CD4-positive, alpha-beta memory T cell (primary cell): ENCODE measurements at regions of chr6 and their contacts with region 1.

Region 1: GRCh38 chr6:31862344-31863227 is at the start of gene NEU1:
- DNase-seq: peak; percentile 97 to 100 (median 100)
- H3K4me3 ChIP-seq: peak within 1 kb of the TSS; percentile 88 to 95
- H3K4me3 Mint-ChIP-seq: peak within 1 kb of the TSS; percentile 87 to 96 (median 94)
- H3K27ac ChIP-seq: peak within 1 kb of the TSS; percentile 90
- H3K27ac Mint-ChIP-seq: peak within 1 kb of the TSS; percentile 94 to 98 (median 97)
- H3K4me1 ChIP-seq: peaks cover 16% of the 10 kb centered on the region
- H3K4me1 Mint-ChIP-seq: peaks cover 14 to 33% (median 23%) of the 10 kb centered on the region in 4 donors
- H3K27me3 ChIP-seq: no peaks in the 10 kb centered on the region
- H3K27me3 Mint-ChIP-seq: peaks cover 0 to 2% of the 10 kb centered on the region in 2 donors
- total RNA-seq, gene NEU1: 19.6 to 21.1 TPM

Region 2: GRCh38 chr6:31619805-31620585 is 242.6 kb before region 1 on chr6:
- CTCF ChIA-PET with region 1: interaction called, 3 read pairs
- POLR2A ChIA-PET with region 1: interaction called, 5 read pairs
- intact Hi-C with region 1: loop called (anchors 1 kb)
- DNase-seq: peak; percentile 96 to 98 (median 98)
- H3K4me3 ChIP-seq: peak overlapping the region in 1 of 2 donors; percentile 93
- H3K4me3 Mint-ChIP-seq: peak overlapping the region; percentile 89 to 98 (median 93)
- H3K27ac ChIP-seq: peak overlapping the region; percentile 99
- H3K27ac Mint-ChIP-seq: peak overlapping the region; percentile 91 to 99 (median 98)
- H3K4me1 ChIP-seq: peaks cover 34% of the 10 kb centered on the region
- H3K4me1 Mint-ChIP-seq: peaks cover 21 to 49% (median 39%) of the 10 kb centered on the region in 4 donors
- H3K27me3 ChIP-seq: no peaks in the 10 kb centered on the region
- H3K27me3 Mint-ChIP-seq: no peaks in the 10 kb centered on the region

Region 3: GRCh38 chr6:31660381-31661261 is 202.0 kb before region 1 on chr6 and contains the start of gene C6orf47:
- CTCF ChIA-PET with region 1: no interaction called
- POLR2A ChIA-PET with region 1: interaction called, 22 read pairs
- intact Hi-C with region 1: loop called (anchors 1 kb)
- DNase-seq: peak; percentile 64 to 76 (median 66)
- H3K4me3 ChIP-seq: peak within 1 kb of the TSS; percentile 71 to 83
- H3K4me3 Mint-ChIP-seq: peak within 1 kb of the TSS; percentile 86 to 93 (median 92)
- H3K27ac ChIP-seq: peak within 1 kb of the TSS; percentile 84
- H3K27ac Mint-ChIP-seq: peak within 1 kb of the TSS; percentile 88 to 95 (median 91)
- H3K4me1 ChIP-seq: peaks cover 61% of the 10 kb centered on the region
- H3K4me1 Mint-ChIP-seq: peaks cover 48 to 87% (median 66%) of the 10 kb centered on the region in 4 donors
- H3K27me3 ChIP-seq: no peaks in the 10 kb centered on the region
- H3K27me3 Mint-ChIP-seq: no peaks in the 10 kb centered on the region
- total RNA-seq, gene C6orf47: 37.5 to 39.9 TPM

Region 4: GRCh38 chr6:31680840-31681671 is 181.5 kb before region 1 on chr6 and contains the start of gene LY6G5C:
- CTCF ChIA-PET with region 1: interaction called, 4 read pairs
- POLR2A ChIA-PET with region 1: interaction called, 3 read pairs
- intact Hi-C with region 1: loop called (anchors 1 kb)
- DNase-seq: peak in 4 of 5 donors; percentile 51 to 59 (median 56)
- H3K4me3 ChIP-seq: peak within 1 kb of the TSS; percentile 69 to 70
- H3K4me3 Mint-ChIP-seq: peak within 1 kb of the TSS; percentile 86 to 91 (median 90)
- H3K27ac ChIP-seq: peak within 1 kb of the TSS; percentile 51
- H3K27ac Mint-ChIP-seq: peak within 1 kb of the TSS; percentile 77 to 92 (median 86)
- H3K4me1 ChIP-seq: peaks cover 19% of the 10 kb centered on the region
- H3K4me1 Mint-ChIP-seq: peaks cover 11 to 27% (median 16%) of the 10 kb centered on the region in 4 donors
- H3K27me3 ChIP-seq: no peaks in the 10 kb centered on the region
- H3K27me3 Mint-ChIP-seq: no peaks in the 10 kb centered on the region
- total RNA-seq, gene LY6G5C: 4.4 to 4.5 TPM

Region 5: DNA sequence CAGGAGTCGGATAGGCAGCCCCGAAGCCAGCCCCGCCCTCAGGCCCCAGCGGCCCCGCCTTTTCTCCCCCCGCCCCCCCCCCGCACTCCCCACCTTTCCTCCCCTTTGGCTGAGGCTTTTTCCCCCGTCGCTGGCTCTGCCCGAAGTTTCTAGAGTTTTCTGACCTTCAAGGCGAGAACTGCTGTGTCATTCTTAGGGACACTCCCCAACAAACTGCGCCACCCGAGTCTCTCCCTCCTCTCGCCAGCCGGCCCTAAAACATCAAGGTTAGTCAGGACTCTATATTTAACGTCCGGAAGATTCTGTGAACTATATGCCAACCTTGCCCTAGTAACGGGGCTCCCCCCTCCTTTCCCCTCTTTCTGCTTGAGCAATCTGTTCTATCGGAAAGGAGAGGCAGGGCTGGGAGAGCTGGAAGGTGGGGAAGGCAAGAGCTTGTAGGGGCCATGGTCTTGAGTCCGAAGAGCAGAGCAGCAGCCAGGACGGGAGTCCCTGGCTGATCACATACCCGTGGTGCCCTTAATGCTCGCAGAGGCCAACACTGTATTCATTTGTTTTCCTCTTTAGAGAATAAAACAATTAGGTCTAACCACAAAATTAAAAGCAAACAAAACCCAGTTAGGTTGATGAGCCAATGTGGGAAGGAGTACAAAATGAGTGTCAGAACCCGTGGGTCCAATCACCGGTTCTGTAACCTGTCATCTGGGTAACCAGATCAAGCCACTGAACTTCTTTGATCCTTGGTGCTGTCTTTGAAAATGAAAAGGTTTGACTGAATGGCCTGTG is 40.4 kb before region 1 on chr6:
- CTCF ChIA-PET with region 1: no interaction called
- POLR2A ChIA-PET with region 1: interaction called, 11 read pairs
- intact Hi-C with region 1: loop called (anchors 5 kb)
- DNase-seq: peak; percentile 71 to 83 (median 73)
- H3K4me3 ChIP-seq: peak overlapping the region; percentile 84 to 96
- H3K4me3 Mint-ChIP-seq: peak overlapping the region; percentile 94 to 98 (median 97)
- H3K27ac ChIP-seq: peak overlapping the region; percentile 74
- H3K27ac Mint-ChIP-seq: peak overlapping the region; percentile 98 to 99 (median 98)
- H3K4me1 ChIP-seq: peaks cover 72% of the 10 kb centered on the region
- H3K4me1 Mint-ChIP-seq: peaks cover 31 to 81% (median 54%) of the 10 kb centered on the region in 4 donors
- H3K27me3 ChIP-seq: no peaks in the 10 kb centered on the region
- H3K27me3 Mint-ChIP-seq: no peaks in the 10 kb centered on the region

Region 6: DNA sequence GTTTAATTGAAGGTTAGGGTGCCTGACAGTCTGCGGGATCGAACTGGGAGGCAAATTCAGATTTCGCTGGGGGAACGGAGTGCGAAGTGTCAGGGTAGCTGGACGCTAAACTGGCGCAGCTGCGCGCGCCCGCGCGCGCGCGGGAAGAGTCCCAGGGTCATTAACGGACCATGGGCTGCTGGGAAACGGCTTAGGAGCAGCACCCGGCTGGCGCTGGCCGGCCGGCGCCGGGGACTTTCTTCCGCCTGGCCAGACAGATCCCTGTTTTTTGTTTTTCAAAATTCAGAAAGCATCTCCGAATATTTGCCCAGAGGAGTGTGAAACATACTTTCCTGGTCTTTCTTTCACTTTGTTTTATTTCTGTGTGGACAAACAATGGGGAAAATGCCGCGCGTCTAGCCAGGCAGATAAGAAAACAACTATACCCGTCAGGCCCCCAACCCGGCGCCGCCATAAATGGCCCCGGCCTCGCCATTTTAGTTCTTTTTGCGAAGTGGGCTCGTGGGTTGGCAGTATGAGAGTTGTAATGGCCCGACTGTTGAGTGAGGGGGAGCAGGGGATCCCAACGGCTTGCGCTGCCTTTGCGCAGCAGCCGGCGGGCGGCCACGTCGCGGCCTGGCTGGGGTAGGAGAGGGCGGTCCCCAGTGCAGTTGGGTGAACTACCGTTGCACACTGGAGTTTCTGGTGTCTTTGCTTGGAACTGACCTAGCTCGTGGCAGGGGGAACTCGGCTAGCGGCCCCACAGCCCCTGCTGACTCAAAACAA is 28.0 kb before region 1 on chr6:
- CTCF ChIA-PET with region 1: interaction called, 23 read pairs
- POLR2A ChIA-PET with region 1: interaction called, 43 read pairs
- intact Hi-C with region 1: loop called (anchors 1 kb)
- DNase-seq: peak; percentile 80 to 84 (median 81)
- H3K4me3 ChIP-seq: peak overlapping the region; percentile 75 to 88
- H3K4me3 Mint-ChIP-seq: peak overlapping the region; percentile 88 to 99 (median 96)
- H3K27ac ChIP-seq: peak overlapping the region; percentile 88
- H3K27ac Mint-ChIP-seq: peak overlapping the region; percentile 97 to 99 (median 99)
- H3K4me1 ChIP-seq: peaks cover 61% of the 10 kb centered on the region
- H3K4me1 Mint-ChIP-seq: peaks cover 27 to 65% (median 48%) of the 10 kb centered on the region in 4 donors
- H3K27me3 ChIP-seq: no peaks in the 10 kb centered on the region
- H3K27me3 Mint-ChIP-seq: no peaks in the 10 kb centered on the region

Region 7: DNA sequence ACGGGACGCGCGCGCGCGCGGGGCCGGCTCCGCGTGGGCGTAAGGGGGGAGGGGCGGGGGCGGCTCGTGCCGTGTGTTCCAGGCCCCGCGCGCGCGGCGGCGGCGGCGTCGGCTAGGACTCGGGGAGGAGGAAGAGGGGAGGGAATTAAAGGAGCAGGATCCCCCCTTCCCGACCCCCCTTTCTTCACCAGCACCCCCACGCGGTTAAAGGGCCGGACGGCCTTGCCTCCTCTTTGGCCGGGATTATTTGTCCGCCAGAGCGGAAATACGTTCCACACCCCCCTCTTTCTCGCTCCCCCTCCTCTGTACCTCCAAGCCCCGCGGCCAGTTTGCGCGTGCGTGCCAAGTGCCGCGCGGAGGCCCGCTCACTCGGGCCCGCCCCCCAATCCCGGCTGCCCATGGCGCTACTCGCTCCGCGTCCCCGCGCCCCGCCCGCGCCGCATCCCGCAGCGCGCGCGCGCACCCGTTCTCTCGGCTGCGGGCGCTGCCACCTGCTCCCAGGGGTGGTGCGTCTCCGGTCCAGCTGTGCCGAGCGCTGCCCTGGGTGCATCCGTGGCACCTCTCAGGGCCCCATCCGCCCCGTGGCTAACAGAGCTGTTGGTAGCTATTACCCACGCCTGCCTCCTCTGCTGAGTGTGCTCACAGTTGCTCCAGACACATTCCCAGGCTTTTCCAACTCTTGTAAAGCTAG is 39.5 kb after region 1 on chr6 and contains the start of gene ZBTB12:
- CTCF ChIA-PET with region 1: interaction called, 6 read pairs
- POLR2A ChIA-PET with region 1: interaction called, 21 read pairs
- intact Hi-C with region 1: loop called (anchors 1 kb)
- DNase-seq: peak; percentile 83 to 87 (median 86)
- H3K4me3 ChIP-seq: peak within 1 kb of the TSS; percentile 49 to 78
- H3K4me3 Mint-ChIP-seq: peak within 1 kb of the TSS; percentile 78 to 92 (median 90)
- H3K27ac ChIP-seq: peak within 1 kb of the TSS; percentile 58
- H3K27ac Mint-ChIP-seq: peak within 1 kb of the TSS; percentile 71 to 95 (median 89)
- H3K4me1 ChIP-seq: peaks cover 30% of the 10 kb centered on the region
- H3K4me1 Mint-ChIP-seq: peaks cover 17 to 36% (median 27%) of the 10 kb centered on the region in 4 donors
- H3K27me3 ChIP-seq: no peaks in the 10 kb centered on the region
- H3K27me3 Mint-ChIP-seq: peaks cover 0 to 1% of the 10 kb centered on the region in 2 donors
- total RNA-seq, gene ZBTB12: 2.4 to 2.5 TPM

Region 8: DNA sequence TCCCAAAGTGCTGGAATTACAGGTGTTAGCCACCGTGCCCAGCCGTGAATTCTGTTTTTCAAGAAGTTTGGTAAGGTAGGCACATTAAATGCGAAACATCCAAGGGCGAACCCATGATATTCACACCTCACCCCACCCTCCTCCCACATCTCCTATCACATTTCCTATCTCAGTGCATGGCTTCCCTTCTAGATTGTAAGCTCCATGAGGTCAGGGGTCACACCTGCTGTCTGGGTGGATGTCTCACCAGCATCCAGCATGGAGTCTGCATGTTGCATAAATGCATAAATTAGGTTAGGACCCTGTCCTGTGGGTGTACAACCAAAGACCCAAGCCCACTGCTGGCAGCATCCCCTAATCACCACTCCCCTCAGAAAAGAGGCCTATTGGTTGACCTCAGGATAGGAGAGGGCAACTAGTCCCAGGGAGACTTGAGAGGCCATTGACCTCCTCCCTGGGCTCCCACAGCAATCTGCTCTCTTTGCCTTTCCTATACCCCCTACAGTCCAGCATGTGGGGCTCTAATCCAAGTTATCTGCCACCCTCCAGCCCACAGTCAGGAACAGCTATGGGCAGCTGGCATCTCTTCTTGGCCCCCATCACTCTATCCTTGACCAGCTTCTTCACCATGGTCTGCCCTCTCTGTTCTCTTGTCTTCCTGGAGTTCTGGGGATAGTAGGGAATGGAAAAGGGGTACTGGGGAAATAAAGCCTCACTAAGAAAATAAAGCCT is 285.0 kb after region 1 on chr6:
- CTCF ChIA-PET with region 1: no interaction called
- POLR2A ChIA-PET with region 1: no interaction called
- intact Hi-C with region 1: no loop called
- DNase-seq: no peak
- H3K4me3 ChIP-seq: no peak overlapping the region
- H3K4me3 Mint-ChIP-seq: peak overlapping the region in 1 of 8 donors; percentile 87
- H3K27ac ChIP-seq: no peak overlapping the region
- H3K27ac Mint-ChIP-seq: peak overlapping the region in 1 of 7 donors; percentile 57
- H3K4me1 ChIP-seq: peaks cover 3% of the 10 kb centered on the region
- H3K4me1 Mint-ChIP-seq: peaks cover 13 to 44% (median 26%) of the 10 kb centered on the region in 4 donors
- H3K27me3 ChIP-seq: peaks cover 6% of the 10 kb centered on the region
- H3K27me3 Mint-ChIP-seq: peaks cover 25 to 27% of the 10 kb centered on the region in 2 donors